Activated CD8-positive, alpha-beta T cell treated with anti-CD3 and anti-CD28 coated beads for 36 hours (primary cell): ENCODE measurements at regions of chr1 and their contacts with region 1.

Region 1: DNA sequence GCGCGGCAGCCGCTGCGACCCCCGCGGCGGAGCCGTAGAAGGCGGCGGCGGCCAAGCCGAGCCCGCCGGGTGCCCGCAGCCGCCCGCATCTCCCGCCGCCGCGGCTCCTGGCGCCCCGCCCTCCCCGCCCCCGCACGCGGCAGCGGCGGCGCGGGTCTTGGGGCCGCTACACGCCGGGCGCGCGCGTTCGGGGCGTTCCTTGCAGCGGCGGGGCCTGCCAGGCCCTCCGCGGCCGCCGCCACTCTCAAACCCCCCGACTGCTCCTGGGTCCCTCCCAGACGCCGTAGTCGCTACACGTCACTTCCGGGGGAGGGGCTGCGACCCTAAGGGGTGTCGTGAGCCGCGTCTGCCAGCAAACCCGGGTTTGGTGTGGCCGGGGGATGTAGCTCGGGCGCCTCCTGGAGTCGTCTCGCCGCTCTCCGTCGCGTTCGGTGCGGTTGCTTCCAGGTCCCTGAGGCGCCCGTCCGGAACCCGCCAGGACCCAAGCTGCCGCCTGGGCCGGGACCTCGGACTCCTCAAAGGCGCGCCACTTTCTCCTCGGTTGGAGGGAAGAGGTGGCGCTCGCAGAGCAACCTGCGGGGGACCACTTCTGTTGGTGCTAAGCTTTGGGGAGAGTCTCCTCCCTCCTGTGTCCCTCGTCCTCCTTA is at the start of gene ELK4:
- DNase-seq: peak; percentile 99
- ATAC-seq: peak; percentile 85
- H3K4me3 Mint-ChIP-seq: peak within 1 kb of the TSS; percentile 93
- H3K27ac Mint-ChIP-seq: peak within 1 kb of the TSS; percentile 96
- H3K4me1 Mint-ChIP-seq: peaks cover 34% of the 10 kb centered on the region
- H3K27me3 Mint-ChIP-seq: no peaks in the 10 kb centered on the region
- CTCF ChIP-seq: peak; percentile 67
- total RNA-seq, gene ELK4: 61.5 to 62.1 TPM

Region 2: GRCh38 chr1:205515781-205516253 is 116.0 kb before region 1 on chr1:
- CTCF ChIA-PET with region 1: no interaction called
- POLR2A ChIA-PET with region 1: no interaction called
- intact Hi-C with region 1: no loop called
- DNase-seq: no peak
- ATAC-seq: no peak
- H3K4me3 Mint-ChIP-seq: no peak overlapping the region
- H3K27ac Mint-ChIP-seq: no peak overlapping the region
- H3K4me1 Mint-ChIP-seq: peaks cover 6% of the 10 kb centered on the region
- H3K27me3 Mint-ChIP-seq: no peaks in the 10 kb centered on the region
- CTCF ChIP-seq: no peak

Region 3: DNA sequence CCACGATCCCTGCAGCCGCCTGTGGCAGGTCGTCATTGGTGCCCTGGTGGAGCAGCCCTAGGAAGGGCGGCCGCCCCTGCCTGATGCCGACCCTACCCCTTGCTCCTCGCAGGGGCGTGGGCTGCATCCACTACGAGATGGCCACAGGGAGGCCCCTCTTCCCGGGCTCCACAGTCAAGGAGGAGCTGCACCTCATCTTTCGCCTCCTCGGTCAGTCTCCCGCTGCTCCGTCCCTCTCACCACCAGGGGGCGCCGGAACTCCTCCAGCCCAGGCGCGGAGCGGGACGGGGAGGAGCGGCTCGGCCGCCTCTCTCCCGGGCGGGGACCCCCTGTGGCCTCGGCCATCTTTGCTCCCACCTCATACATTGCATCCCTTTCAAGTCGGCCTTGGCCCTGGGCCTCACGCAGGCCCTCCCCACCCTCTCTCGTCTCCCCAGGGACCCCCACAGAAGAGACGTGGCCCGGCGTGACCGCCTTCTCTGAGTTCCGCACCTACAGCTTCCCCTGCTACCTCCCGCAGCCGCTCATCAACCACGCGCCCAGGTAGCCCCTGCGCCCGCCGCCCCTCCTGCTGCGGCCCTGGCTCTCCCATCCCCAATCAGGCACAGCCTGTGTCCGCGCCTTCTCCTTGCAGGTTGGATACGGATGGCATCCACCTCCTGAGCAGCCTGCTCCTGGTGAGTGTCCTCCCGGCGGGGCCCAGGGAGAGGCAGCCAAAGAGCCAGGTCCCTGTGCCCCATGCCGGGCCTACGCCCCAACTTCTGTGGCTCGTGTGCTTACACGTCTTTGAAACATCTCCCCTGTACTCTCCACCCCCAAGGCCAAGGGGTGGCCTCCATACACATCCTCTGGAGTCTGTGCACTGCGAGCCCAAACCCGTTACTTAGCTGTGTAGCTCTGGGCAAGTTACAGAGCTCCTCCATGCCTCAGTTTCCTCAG is 102.7 kb before region 1 on chr1:
- CTCF ChIA-PET with region 1: interaction called, 18 read pairs
- POLR2A ChIA-PET with region 1: interaction called, 6 read pairs
- intact Hi-C with region 1: no loop called
- DNase-seq: peak; percentile 90
- ATAC-seq: peak; percentile 92
- H3K4me3 Mint-ChIP-seq: peak overlapping the region; percentile 57
- H3K27ac Mint-ChIP-seq: no peak overlapping the region
- H3K4me1 Mint-ChIP-seq: peaks cover 5% of the 10 kb centered on the region
- H3K27me3 Mint-ChIP-seq: no peaks in the 10 kb centered on the region
- CTCF ChIP-seq: peak; percentile 98

Region 4: GRCh38 chr1:205582471-205583291 is 49.2 kb before region 1 on chr1:
- CTCF ChIA-PET with region 1: interaction called, 306 read pairs
- POLR2A ChIA-PET with region 1: interaction called, 5 read pairs
- intact Hi-C with region 1: no loop called
- DNase-seq: peak; percentile 65
- ATAC-seq: peak; percentile 83
- H3K4me3 Mint-ChIP-seq: no peak overlapping the region
- H3K27ac Mint-ChIP-seq: peak overlapping the region; percentile 46
- H3K4me1 Mint-ChIP-seq: peaks cover 12% of the 10 kb centered on the region
- H3K27me3 Mint-ChIP-seq: peaks cover under 1% of the 10 kb centered on the region
- CTCF ChIP-seq: no peak

Region 5: DNA sequence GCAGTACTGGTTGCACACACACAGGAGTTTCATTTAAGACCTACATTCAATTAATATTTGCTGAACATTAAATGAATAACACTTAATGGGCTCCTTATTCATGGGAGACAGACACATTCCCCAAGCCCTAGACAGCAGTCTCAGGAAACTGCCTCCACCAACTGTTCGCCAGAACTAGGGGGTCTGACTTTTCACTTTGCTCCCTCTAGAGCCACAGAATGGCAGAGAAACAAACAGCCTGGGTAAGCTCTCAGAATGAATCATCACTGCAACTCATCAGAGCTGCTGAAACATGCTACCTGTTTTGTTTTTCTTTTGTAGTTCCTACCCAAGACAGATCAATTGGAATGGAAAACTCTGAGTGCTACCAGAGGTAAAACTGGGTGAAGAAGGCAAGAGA is 31.8 kb before region 1 on chr1:
- CTCF ChIA-PET with region 1: interaction called, 306 read pairs
- POLR2A ChIA-PET with region 1: interaction called, 119 read pairs
- intact Hi-C with region 1: no loop called
- DNase-seq: peak; percentile 39
- ATAC-seq: peak; percentile 93
- H3K4me3 Mint-ChIP-seq: no peak overlapping the region
- H3K27ac Mint-ChIP-seq: peak overlapping the region; percentile 85
- H3K4me1 Mint-ChIP-seq: peaks cover 40% of the 10 kb centered on the region
- H3K27me3 Mint-ChIP-seq: no peaks in the 10 kb centered on the region
- CTCF ChIP-seq: peak; percentile 52

Region 6: DNA sequence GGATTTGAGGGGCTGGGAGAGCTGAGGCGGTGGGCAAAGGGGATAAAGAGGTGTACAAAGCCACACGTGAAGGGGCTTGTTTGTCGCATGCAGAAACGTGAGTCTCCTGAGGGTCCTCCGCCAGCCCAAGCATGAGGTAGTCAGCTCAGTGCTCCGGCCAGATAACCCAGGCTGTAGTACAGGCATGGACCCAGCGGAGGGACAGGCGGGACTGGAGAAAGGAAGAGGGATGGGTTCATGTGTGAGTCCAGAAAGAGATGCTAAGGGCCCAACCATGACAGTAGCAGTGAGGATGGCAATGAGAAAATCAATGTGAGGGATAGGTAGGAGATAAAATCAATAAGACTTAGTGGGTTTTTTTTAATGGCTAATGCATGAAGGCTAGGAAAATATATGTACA is 13.7 kb after region 1 on chr1:
- CTCF ChIA-PET with region 1: interaction called, 12 read pairs
- POLR2A ChIA-PET with region 1: interaction called, 7 read pairs
- intact Hi-C with region 1: no loop called
- DNase-seq: no peak
- ATAC-seq: no peak
- H3K4me3 Mint-ChIP-seq: no peak overlapping the region
- H3K27ac Mint-ChIP-seq: no peak overlapping the region
- H3K4me1 Mint-ChIP-seq: no peaks in the 10 kb centered on the region
- H3K27me3 Mint-ChIP-seq: peaks cover 3% of the 10 kb centered on the region
- CTCF ChIP-seq: no peak